Activated naive CD4-positive, alpha-beta T cell treated with anti-CD3 and anti-CD28 coated beads for 36 hours (primary cell): ENCODE measurements at regions of chr22 and their contacts with region 1.

Region 1: GRCh38 chr22:40651563-40652501 is 15.3 kb upstream of the MRTFA start:
- DNase-seq: peak; percentile 96
- H3K4me3 Mint-ChIP-seq: peak overlapping the region; percentile 49
- H3K27ac Mint-ChIP-seq: peak overlapping the region; percentile 75
- H3K4me1 Mint-ChIP-seq: peaks cover 16% of the 10 kb centered on the region
- H3K27me3 Mint-ChIP-seq: no peaks in the 10 kb centered on the region

Region 2: DNA sequence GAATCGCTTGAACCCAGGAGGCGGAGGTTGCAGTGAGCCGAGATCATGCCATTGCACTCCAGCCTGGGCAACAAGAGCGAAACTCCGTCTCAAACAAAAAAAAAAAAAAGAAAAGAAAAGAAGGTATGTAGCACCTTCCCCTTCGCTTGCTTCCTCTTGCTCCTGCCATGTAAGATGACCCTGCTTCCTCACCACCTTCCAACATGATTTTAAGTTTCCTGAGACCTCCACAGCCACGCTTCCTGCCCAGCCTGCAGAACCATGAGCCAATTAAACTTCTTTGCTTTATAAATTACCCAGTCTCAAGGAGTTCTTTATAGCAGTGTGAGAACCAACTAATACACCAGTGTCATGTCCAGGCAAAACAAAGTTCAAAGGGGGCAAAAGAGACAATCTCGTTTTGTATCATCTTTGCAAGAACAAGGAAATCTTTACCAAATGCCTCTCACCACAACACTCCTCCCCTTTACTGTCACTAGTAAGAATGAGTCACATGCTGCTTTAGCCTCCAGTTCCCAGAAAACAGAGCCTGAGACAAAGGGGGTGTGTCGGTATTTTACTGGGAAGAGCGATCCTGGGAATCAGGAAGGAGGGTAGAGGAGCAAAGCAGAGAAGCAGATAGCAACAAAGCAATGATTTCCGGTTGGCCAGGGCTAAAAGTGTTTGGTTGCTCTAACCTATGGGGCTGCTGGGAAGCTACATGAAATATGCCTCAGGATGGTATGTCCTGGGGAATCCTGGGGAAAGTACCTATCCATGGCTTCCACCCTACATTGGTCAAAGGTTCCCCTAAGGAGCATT is 17.0 kb after region 1 on chr22:
- CTCF ChIA-PET with region 1: no interaction called
- intact Hi-C with region 1: loop called (anchors 1 kb)
- DNase-seq: peak; percentile 50
- H3K4me3 Mint-ChIP-seq: peak overlapping the region; percentile 33
- H3K27ac Mint-ChIP-seq: peak overlapping the region; percentile 88
- H3K4me1 Mint-ChIP-seq: peaks cover 22% of the 10 kb centered on the region
- H3K27me3 Mint-ChIP-seq: no peaks in the 10 kb centered on the region